Sciatic nerve (tissue), 2 donors: ENCODE measurements at regions of chr11 and their contacts with region 1.

Region 1: GRCh38 chr11:116972691-116973090 is 125.5 kb downstream of the SIK3 start:
- DNase-seq: no peak
- ATAC-seq: peak; percentile 46

Region 2: GRCh38 chr11:116948391-116948790 is 24.3 kb before region 1 on chr11:
- intact Hi-C with region 1: loop called (anchors 1 kb)
- DNase-seq: no peak
- ATAC-seq: no peak

Region 3: GRCh38 chr11:118290923-118291322 is 1318.2 kb after region 1 on chr11:
- intact Hi-C with region 1: no loop called
- DNase-seq: no peak
- ATAC-seq: peak; percentile 24